PC-3 (cell line): ENCODE measurements at regions of chr12 and their contacts with region 1.

Region 1: DNA sequence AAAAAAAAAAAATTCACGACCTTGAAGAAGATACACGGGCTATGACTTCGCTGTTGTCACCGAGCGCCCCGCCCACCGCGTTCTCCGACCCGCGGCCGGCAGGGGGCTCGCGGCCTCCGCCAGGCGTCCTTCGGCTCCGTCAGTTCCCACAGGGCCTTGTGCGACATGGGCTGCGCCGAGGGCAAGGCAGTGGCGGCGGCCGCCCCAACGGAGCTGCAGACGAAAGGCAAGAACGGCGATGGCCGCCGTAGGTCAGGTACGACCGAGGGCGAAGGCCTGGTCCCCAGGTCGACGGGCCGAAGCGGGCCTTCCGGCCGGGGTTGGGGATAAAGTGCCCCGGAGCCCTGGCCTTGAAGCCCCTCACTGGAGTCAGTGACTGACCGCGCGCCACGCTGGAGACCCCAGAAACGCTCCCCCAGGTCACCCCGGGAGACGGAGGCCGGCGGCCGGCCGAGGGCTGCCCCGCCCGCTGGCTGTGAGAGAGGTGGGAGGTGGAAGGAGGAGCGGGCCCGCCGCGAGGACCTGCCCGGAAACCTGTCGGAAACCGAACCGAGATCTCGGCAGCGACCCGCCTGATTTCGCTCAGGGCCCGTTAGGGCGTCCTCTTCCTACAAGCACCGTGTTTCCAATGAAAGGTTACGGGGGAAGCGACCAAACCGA is at the start of gene TXNRD1:
- DNase-seq: no peak
- ATAC-seq: no peak
- H3K4me3 ChIP-seq: no peak within 1 kb of the TSS
- H3K27ac ChIP-seq: peak within 1 kb of the TSS; percentile 63
- H3K4me1 ChIP-seq: peaks cover 33% of the 10 kb centered on the region
- H3K27me3 ChIP-seq: no peaks in the 10 kb centered on the region
- CTCF ChIP-seq: no peak
- total RNA-seq, gene TXNRD1: 419 and 430 TPM in 2 replicates

Region 2: DNA sequence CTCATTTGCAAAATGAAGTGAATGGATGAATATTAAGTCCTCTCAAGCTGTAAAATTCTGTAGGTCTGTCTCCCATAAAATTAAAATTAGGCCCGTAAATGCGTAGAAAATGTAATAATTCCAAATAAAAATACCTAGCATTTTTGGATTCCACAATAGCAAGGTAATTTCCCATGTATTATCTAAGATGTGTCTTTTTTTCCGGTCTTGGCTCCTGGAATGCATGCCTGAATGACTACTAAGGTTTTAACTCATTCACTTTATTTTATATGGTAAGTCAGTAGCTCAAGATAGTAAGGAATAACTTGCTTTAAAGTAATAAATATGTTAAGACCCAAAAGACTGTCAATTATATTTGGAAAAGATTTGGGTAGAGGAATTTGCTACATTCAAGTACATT is 10.9 kb after region 1 on chr12:
- CTCF ChIA-PET with region 1: interaction called, 20 read pairs
- POLR2A ChIA-PET with region 1: no interaction called
- intact Hi-C with region 1: no loop called
- DNase-seq: peak; percentile 89
- ATAC-seq: peak; percentile 91
- H3K4me3 ChIP-seq: no peak overlapping the region; the same call in 1 of the 2 replicates
- H3K27ac ChIP-seq: peak overlapping the region; percentile 64
- H3K4me1 ChIP-seq: peaks cover 29% of the 10 kb centered on the region
- H3K27me3 ChIP-seq: no peaks in the 10 kb centered on the region
- CTCF ChIP-seq: no peak

Region 3: DNA sequence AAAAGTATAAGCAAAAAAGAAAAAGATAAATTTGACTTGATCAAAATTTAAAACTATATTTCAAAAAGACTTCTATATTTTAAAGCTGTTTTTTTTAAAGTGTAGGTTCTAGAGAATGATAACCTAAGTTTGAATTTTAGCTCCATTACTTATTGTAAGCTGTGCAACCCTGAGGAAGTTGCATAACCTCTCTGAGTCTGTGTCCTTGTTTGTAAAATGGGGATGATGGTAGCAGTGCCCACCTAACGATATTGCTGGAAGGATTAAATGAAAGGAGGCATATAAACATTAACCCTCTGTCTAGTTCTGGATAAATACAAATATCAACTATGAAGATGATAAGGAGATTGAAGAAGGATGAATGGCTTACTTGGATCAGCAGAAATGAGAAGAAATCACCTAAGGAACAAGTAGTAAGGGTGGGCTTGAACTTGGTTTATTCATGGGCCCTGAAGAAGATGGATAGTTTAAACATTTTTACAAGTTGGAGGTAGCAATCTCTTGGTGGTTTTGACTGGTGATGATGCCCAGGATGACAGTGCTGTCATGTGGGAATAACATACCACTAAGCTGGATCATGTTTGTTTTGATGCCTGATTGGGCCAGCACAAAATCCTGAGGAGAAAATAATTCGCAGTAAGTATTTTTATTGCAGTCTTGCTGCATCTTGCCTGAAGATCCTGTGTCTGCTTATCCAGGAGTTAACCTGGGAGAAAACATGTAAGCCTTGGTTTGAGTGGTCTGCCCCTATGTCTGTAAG is 34.8 kb after region 1 on chr12:
- CTCF ChIA-PET with region 1: no interaction called
- POLR2A ChIA-PET with region 1: interaction called, 22 read pairs
- intact Hi-C with region 1: loop called (anchors 1 kb)
- DNase-seq: no peak
- ATAC-seq: no peak
- H3K4me3 ChIP-seq: no peak overlapping the region
- H3K27ac ChIP-seq: no peak overlapping the region
- H3K4me1 ChIP-seq: peaks cover 4% of the 10 kb centered on the region
- H3K27me3 ChIP-seq: no peaks in the 10 kb centered on the region
- CTCF ChIP-seq: no peak

Region 4: GRCh38 chr12:104258476-104259067 is 42.8 kb after region 1 on chr12:
- CTCF ChIA-PET with region 1: no interaction called
- POLR2A ChIA-PET with region 1: no interaction called
- intact Hi-C with region 1: loop called (anchors 1 kb)
- DNase-seq: no peak
- ATAC-seq: no peak
- H3K4me3 ChIP-seq: no peak overlapping the region
- H3K27ac ChIP-seq: peak overlapping the region; percentile 46
- H3K4me1 ChIP-seq: peaks cover 43% of the 10 kb centered on the region
- H3K27me3 ChIP-seq: no peaks in the 10 kb centered on the region
- CTCF ChIP-seq: no peak

Region 5: DNA sequence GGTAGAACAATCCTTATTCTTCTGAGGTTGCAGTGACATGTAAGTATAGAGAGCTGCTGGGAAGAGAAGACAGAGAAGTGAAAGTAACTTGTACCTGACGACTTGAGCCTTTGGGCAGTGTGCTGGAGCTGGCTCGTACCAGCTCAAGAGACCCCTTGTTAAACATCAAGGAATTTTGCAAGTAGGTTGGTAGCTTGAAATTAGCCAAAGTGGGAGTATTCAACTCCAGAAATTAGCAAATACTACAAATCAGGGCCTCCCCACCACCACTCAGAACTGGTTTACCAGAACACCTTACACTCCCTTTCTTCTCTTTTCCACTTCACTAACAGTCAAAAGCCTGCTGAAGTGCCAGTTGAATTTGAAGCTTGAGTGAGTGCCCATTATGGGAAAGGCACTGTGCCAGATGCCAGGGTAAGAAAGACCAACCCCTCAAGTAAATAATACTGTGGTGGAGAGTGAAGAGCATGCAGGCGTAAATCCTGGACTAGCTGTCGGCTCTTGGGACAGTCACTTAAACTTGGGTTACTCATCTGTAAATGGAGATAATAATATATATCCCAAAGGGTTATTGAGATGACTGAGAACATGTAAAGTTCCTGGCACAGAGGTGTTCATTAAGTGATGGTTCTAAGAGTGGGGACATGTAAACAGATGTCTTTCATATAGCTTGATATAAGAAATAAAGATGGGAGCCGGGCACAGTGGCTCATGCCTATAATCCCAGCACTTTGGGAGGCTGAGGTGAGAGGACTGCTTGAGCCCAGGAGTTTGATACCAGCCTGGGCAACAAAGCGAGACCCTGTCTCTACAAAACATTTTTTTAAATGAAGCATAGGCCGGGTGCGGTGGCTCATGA is 60.7 kb after region 1 on chr12:
- CTCF ChIA-PET with region 1: interaction called, 8 read pairs
- POLR2A ChIA-PET with region 1: interaction called, 17 read pairs
- intact Hi-C with region 1: loop called (anchors 1 kb)
- DNase-seq: peak; percentile 95
- ATAC-seq: peak; percentile 44
- H3K4me3 ChIP-seq: peak overlapping the region; percentile 64
- H3K27ac ChIP-seq: peak overlapping the region; percentile 99
- H3K4me1 ChIP-seq: peaks cover 75% of the 10 kb centered on the region
- H3K27me3 ChIP-seq: no peaks in the 10 kb centered on the region
- CTCF ChIP-seq: no peak

Region 6: GRCh38 chr12:105107494-105108371 is 892.0 kb after region 1 on chr12 and contains the start of gene WASHC4:
- CTCF ChIA-PET with region 1: no interaction called
- POLR2A ChIA-PET with region 1: no interaction called
- intact Hi-C with region 1: loop called (anchors 10 kb)
- DNase-seq: peak; percentile 97
- ATAC-seq: peak; percentile 92
- H3K4me3 ChIP-seq: peak within 1 kb of the TSS; percentile 72
- H3K27ac ChIP-seq: peak within 1 kb of the TSS; percentile 76
- H3K4me1 ChIP-seq: peaks cover 24% of the 10 kb centered on the region; the same call in 1 of the 2 replicates
- H3K27me3 ChIP-seq: no peaks in the 10 kb centered on the region
- CTCF ChIP-seq: no peak
- total RNA-seq, gene WASHC4: 38.2 and 46.9 TPM in 2 replicates